Lower leg skin (tissue), 4 donors: ENCODE measurements at regions of chr19 and their contacts with region 1.

Region 1: GRCh38 chr19:29761575-29762232 is 46.6 kb upstream of the C19orf12 start:
- DNase-seq: no peak
- H3K4me3 ChIP-seq: no peak overlapping the region
- CTCF ChIP-seq: no peak
- POLR2A ChIP-seq: no peak

Region 2: DNA sequence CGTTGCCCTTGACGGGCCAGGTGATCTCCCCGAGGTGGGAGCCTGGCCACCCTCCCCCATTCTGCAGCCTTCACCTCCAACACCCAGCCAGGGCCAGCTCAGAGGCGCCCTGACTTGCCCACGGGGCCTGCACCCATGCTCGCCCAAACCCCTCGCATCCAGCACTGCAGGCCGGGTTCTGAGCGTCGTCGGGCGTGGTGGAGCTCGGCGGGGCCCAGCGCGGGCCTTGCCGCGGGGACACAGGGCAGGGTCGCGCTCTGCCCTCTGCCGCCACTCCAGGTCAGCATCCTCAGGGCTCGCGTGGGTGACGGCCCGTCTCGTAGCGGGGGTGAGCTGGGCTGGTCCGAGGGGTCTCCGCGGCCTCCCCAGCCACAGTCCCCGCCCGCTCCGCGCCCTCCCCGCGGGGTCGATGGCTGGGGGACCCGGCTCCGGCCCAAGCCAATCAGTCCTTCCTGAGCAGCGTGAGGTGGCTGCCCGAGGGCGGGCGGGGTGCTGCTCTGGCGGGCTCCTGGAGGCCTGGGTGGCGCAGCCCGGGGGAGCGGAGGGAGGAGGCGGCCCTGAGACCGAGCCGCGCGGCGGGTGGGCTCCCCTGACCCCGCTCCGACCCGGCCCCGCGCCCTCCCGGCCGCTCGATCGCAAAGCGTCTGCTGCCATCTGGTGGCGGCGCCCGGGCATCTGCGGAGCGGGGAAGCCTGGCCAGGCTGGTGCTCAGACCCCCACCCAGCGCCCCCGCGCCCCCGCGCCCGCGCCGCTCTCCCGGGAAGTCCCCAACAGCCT is 111.5 kb after region 1 on chr19:
- intact Hi-C with region 1: loop called (anchors 10 kb)
- DNase-seq: peak in 1 of 2 donors; percentile 90
- H3K4me3 ChIP-seq: no peak overlapping the region
- CTCF ChIP-seq: no peak
- POLR2A ChIP-seq: no peak